Activated naive CD4-positive, alpha-beta T cell treated with anti-CD3 and anti-CD28 coated beads for 36 hours (primary cell): ENCODE measurements at regions of chr12 and their contacts with region 1.

Region 1: GRCh38 chr12:93742110-93742934 is 65.1 kb downstream of the CRADD start:
- DNase-seq: peak; percentile 60
- H3K4me3 Mint-ChIP-seq: peak overlapping the region; percentile 76
- H3K27ac Mint-ChIP-seq: peak overlapping the region; percentile 75
- H3K4me1 Mint-ChIP-seq: peaks cover 46% of the 10 kb centered on the region
- H3K27me3 Mint-ChIP-seq: no peaks in the 10 kb centered on the region

Region 2: DNA sequence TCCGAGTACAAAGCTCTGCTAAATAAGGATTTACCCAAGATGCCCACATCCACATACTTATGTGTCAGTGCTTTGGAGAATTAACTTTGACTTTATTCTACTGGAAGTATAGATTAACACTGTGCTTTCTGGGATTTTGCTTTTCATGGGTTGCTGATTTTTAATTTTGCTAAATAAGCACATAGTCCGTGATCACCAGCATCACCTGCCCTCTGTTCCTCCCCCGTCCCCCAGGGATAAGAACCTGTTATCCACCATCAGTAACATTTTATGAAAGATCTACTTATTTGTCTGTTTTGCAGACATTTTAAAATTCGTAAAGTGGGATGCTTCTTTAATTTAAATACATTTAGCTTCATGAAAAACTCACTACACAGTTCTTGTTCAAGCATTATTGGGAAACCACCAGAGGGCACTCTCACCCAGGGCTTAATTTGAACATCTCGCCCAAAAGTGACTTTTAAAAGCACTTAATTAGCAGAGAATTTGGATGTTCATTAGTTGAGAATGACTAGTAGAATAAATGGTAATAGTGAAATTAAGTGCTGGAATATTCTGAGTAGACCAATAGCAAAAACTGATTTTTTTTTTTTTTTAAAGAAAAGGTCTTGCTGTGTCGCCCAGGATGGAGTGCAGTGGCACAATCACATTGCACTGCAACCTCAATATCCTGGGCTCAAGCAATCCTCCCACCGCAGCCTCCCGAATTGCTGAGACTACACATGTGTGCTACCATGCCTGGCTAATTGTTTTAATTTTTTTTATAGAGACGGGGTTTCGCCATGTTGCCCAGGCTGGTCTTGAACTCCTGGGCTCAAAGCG is 239.3 kb before region 1 on chr12:
- CTCF ChIA-PET with region 1: interaction called, 3 read pairs
- intact Hi-C with region 1: loop called (anchors 1 kb)
- DNase-seq: peak; percentile 75
- H3K4me3 Mint-ChIP-seq: no peak overlapping the region
- H3K27ac Mint-ChIP-seq: no peak overlapping the region
- H3K4me1 Mint-ChIP-seq: peaks cover 17% of the 10 kb centered on the region
- H3K27me3 Mint-ChIP-seq: no peaks in the 10 kb centered on the region

Region 3: GRCh38 chr12:93591137-93591868 is 151.0 kb before region 1 on chr12:
- CTCF ChIA-PET with region 1: no interaction called
- intact Hi-C with region 1: loop called (anchors 5 kb)
- DNase-seq: peak; percentile 45
- H3K4me3 Mint-ChIP-seq: peak overlapping the region; percentile 87
- H3K27ac Mint-ChIP-seq: no peak overlapping the region
- H3K4me1 Mint-ChIP-seq: peaks cover 11% of the 10 kb centered on the region
- H3K27me3 Mint-ChIP-seq: peaks cover 52% of the 10 kb centered on the region